Activated naive CD4-positive, alpha-beta T cell treated with anti-CD3 and anti-CD28 coated beads for 36 hours (primary cell): ENCODE measurements at regions of chr2 and their contacts with region 1.

Region 1: DNA sequence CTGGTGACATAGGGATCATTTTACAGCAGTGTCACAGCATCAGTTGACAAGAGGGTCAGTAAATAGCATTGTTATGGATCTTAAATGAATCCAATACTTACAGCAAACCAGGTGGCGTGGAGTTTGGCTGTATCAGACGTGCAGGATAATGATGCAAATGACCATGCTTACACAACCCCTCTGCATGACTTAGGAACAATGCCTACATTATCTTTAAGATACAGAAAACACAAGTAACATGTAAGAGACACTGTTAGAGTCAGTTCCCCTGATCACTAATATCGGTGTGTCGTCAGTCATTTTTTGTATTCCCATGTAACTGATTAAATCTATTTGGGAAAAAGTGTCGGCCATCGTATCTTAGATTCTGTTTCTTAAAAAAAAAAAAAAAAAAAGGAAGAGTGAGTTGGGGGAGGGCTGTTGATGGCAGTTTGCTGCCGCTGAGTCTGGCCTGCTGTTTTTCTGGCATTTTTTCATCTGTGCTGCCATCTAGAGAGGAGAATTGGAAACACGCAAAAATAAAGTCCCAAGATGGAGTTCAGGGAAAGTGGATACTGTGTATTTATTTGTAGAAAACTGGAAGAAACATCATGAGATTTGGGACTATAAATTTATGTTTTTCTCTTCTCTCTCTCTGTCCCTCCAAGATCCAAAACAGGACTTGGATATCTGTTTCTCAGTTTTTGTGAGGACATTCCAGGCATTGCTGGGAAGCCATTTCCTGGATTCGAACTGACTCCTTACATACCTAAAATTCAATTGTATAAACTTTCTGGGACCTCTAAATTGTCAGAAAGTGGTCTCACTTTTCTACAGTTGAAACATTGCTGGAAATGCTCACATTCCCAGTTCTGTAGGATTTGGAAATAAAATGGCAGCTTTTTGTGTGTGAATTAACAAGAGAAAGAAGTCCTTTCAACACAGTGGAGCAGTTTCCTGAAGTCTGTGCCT is 60.3 kb upstream of the AGPS start:
- DNase-seq: peak; percentile 58
- H3K4me3 Mint-ChIP-seq: no peak overlapping the region
- H3K27ac Mint-ChIP-seq: no peak overlapping the region
- H3K4me1 Mint-ChIP-seq: peaks cover 16% of the 10 kb centered on the region
- H3K27me3 Mint-ChIP-seq: no peaks in the 10 kb centered on the region

Region 2: DNA sequence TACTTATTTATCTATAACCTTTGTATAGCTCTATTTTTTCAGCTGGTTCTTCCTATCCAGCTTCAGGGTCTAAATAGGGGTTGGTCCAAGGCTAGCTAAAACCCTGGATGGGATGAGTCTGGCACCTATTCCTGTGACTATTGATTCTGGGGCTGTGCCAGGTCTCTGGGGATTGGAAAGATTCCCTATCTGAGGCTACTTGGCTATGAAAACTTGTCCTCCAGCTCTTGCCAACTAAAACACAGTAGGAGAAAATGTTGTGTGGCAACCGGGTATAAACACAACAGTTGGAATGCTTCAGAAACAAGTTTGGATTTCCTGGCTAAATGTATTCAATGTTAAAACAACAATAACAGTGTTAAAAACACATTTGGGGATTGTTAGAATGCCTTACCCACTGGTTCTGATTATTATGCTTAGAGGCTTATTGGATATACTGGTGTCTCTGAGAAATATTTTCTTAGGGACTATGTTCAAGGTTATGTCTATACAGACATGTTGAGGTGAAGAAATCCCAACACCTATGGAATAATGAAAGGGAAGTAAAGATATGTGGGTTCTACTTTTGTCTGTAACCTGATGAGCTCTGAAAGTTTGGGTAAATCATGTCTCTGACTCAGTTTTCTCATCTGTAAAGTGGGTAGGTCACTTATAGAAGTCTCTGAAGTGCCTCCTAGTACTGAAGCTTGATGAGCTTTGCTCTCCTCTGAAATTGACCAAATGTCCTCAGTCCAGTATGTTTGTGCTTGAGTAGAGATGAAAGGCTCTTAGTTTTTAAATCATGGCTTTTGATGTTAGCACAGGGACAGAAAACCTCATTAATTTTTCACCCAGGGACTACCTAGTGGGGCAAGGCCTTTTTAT is 602.4 kb before region 1 on chr2:
- CTCF ChIA-PET with region 1: no interaction called
- intact Hi-C with region 1: no loop called
- DNase-seq: no peak
- H3K4me3 Mint-ChIP-seq: no peak overlapping the region
- H3K27ac Mint-ChIP-seq: no peak overlapping the region
- H3K4me1 Mint-ChIP-seq: no peaks in the 10 kb centered on the region
- H3K27me3 Mint-ChIP-seq: no peaks in the 10 kb centered on the region

Region 3: DNA sequence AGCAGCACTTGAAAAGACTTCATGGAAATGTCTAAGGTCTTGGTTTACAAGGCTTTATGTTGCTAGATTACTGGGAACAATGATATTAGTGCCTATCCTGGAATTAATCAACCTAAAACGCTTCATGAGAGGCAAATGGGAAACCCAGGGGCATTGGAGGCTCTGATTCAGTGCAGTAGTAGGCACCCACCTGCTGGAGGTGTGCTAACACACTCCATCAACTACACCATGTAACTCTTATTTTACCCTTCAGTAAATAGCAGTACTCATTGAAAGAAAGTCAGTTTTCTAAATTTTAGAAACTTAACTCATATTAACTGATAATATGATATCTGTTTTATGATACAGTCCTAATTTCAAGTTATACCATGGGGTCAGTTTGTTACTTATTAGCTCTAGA is 137.1 kb before region 1 on chr2:
- CTCF ChIA-PET with region 1: interaction called, 7 read pairs
- intact Hi-C with region 1: loop called (anchors 1 kb)
- DNase-seq: peak; percentile 18
- H3K4me3 Mint-ChIP-seq: no peak overlapping the region
- H3K27ac Mint-ChIP-seq: no peak overlapping the region
- H3K4me1 Mint-ChIP-seq: no peaks in the 10 kb centered on the region
- H3K27me3 Mint-ChIP-seq: no peaks in the 10 kb centered on the region

Region 4: DNA sequence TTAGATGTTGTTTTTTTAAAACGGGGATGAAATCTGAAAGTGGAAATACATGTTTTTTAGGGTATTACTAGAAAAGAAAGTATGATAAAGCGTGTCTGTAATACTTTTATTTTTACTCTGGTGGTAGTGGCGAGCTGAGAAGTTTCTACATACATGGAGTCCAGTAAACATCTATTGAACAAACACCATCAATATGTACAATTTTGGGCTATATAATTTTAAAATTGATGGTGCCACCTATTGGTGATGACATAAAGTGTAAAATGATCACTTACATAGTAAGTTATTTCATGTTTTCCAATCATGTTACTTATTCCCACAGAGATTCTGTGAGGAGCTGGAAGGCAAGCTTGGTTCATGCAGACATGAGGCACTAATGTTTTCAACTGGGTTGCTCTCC is 36.3 kb before region 1 on chr2:
- CTCF ChIA-PET with region 1: interaction called, 9 read pairs
- intact Hi-C with region 1: loop called (anchors 1 kb)
- DNase-seq: no peak
- H3K4me3 Mint-ChIP-seq: no peak overlapping the region
- H3K27ac Mint-ChIP-seq: no peak overlapping the region
- H3K4me1 Mint-ChIP-seq: peaks cover 17% of the 10 kb centered on the region
- H3K27me3 Mint-ChIP-seq: no peaks in the 10 kb centered on the region

Region 5: GRCh38 chr2:177392373-177393202 is 60.3 kb after region 1 on chr2 and contains the start of gene AGPS:
- CTCF ChIA-PET with region 1: interaction called, 4 read pairs
- intact Hi-C with region 1: loop called (anchors 2 kb)
- DNase-seq: peak; percentile 85
- H3K4me3 Mint-ChIP-seq: peak within 1 kb of the TSS; percentile 93
- H3K27ac Mint-ChIP-seq: peak within 1 kb of the TSS; percentile 62
- H3K4me1 Mint-ChIP-seq: peaks cover 59% of the 10 kb centered on the region
- H3K27me3 Mint-ChIP-seq: no peaks in the 10 kb centered on the region
- total RNA-seq, gene AGPS: 50.7 to 51.8 TPM

Region 6: GRCh38 chr2:177489719-177490301 is 157.5 kb after region 1 on chr2:
- CTCF ChIA-PET with region 1: no interaction called
- intact Hi-C with region 1: no loop called
- DNase-seq: no peak
- H3K4me3 Mint-ChIP-seq: no peak overlapping the region
- H3K27ac Mint-ChIP-seq: no peak overlapping the region
- H3K4me1 Mint-ChIP-seq: no peaks in the 10 kb centered on the region
- H3K27me3 Mint-ChIP-seq: no peaks in the 10 kb centered on the region

Region 7: DNA sequence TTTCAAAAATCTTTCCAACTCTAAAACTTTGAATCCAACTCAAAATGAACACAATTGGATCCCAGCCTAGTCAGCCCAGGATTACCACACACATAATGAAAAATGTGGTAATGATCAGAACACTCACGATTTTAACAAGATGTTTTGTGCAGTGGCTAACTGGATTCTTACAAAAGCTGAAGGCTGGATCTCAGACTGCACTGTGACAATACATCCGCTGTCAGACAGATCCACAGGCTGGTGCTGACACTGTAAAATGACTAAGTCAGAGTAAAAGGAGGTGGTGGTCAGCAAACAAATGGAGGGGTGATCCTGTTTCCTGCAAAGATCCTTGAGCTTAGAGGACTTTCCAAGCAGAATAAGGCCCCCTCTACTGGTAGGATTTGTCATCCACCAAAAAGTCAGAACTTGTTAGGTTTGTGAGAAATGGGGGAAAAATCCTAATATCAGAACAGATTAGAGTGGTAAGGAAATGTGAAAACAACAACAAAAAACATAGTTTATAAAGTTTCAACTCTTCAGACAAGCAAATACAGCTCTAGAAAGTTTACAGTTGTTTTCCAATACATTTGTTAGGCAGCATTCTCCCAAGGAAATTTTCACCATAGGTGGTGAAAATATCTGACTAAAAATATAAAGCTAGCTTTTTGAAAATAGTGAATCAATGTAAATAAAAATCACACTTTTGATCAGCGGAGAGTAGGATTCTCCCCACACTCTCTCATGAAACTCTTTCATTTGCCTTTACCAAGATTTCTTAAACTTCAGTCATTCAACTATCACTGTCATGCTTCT is 272.2 kb after region 1 on chr2:
- CTCF ChIA-PET with region 1: interaction called, 4 read pairs
- intact Hi-C with region 1: loop called (anchors 1 kb)
- DNase-seq: no peak
- H3K4me3 Mint-ChIP-seq: no peak overlapping the region
- H3K27ac Mint-ChIP-seq: no peak overlapping the region
- H3K4me1 Mint-ChIP-seq: no peaks in the 10 kb centered on the region
- H3K27me3 Mint-ChIP-seq: peaks cover 3% of the 10 kb centered on the region

Region 8: DNA sequence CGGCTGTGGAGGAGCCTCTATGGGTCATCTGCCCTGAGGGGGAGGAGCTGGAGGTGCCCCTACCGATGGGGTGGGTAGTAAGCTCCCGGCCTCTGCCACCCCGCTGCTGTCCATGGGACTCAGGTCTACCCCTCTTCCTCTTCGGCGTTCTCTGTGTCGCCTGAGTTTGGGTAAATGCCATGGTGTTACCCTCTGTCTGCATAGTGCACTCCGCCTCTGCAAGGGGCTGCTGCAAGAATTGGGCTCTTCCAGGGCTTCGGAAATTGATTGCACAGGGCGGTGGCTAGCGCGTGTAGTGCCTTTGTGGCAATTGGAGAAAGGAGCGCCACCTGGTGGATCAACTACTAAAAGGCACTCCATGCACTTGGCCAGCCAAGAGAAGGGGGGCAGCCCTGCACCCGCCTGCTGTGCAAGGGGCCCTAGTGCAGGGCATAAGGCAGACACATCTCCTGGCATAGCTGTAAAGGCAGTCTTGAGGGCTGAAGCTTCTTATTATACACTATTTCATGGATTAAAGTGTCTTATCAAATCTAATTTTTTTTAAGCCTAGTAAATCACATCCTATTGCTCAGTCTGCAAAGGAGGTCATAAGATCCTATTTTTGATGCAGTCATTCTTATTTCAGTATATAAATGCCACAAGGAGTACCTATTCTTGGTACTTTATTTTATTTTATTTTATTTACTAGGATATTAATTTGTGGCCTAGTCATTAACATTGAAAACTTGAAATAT is 431.4 kb after region 1 on chr2:
- CTCF ChIA-PET with region 1: interaction called, 8 read pairs
- intact Hi-C with region 1: loop called (anchors 1 kb)
- DNase-seq: peak; percentile 88
- H3K4me3 Mint-ChIP-seq: no peak overlapping the region
- H3K27ac Mint-ChIP-seq: no peak overlapping the region
- H3K4me1 Mint-ChIP-seq: peaks cover 3% of the 10 kb centered on the region
- H3K27me3 Mint-ChIP-seq: peaks cover 12% of the 10 kb centered on the region